Activated CD8-positive, alpha-beta T cell treated with anti-CD3 and anti-CD28 coated beads, Interleukin-2, amount 10 ng/mL, durations not matched to agents 7 days and 5 days (primary cell): ENCODE measurements at regions of chr2 and their contacts with region 1.

Region 1: GRCh38 chr2:191128172-191128910 is 22.5 kb downstream of the STAT4 start:
- DNase-seq: peak; percentile 44
- ATAC-seq: peak; percentile 88
- H3K4me3 Mint-ChIP-seq: peak overlapping the region; percentile 66
- H3K27ac Mint-ChIP-seq: peak overlapping the region; percentile 91
- H3K4me1 Mint-ChIP-seq: peaks cover 77% of the 10 kb centered on the region
- H3K27me3 Mint-ChIP-seq: no peaks in the 10 kb centered on the region

Region 2: GRCh38 chr2:191086706-191087105 is 41.6 kb before region 1 on chr2:
- CTCF ChIA-PET with region 1: no interaction called
- POLR2A ChIA-PET with region 1: no interaction called
- DNase-seq: no peak
- ATAC-seq: no peak
- H3K4me3 Mint-ChIP-seq: no peak overlapping the region
- H3K27ac Mint-ChIP-seq: no peak overlapping the region
- H3K4me1 Mint-ChIP-seq: peaks cover 38% of the 10 kb centered on the region
- H3K27me3 Mint-ChIP-seq: no peaks in the 10 kb centered on the region

Region 3: DNA sequence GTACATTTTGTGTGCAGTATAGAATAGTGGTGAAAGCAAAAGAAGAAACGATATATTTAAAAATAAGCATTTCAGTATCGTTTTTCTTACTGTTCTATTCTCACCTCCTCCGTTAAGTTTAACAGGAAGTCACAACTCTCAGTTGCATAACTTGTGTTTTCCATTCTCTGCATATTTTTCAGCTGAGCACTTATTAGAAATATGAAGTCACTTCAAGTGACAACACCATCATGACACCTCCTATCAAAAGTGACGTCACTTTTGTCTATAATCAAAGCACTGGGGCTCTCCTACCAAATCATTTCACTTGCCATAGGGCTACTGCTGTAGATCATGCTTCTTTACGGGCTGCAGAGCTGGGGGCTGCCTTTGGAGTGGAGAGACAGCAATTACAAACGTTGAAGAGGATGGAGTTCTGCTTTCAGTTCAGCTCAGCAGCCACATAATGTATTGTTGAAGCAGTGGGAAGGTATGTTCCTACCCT is 13.9 kb before region 1 on chr2:
- CTCF ChIA-PET with region 1: interaction called, 12 read pairs
- POLR2A ChIA-PET with region 1: interaction called, 28 read pairs
- DNase-seq: peak; percentile 48
- ATAC-seq: peak; percentile 46
- H3K4me3 Mint-ChIP-seq: peak overlapping the region; percentile 53
- H3K27ac Mint-ChIP-seq: peak overlapping the region; percentile 92
- H3K4me1 Mint-ChIP-seq: peaks cover 76% of the 10 kb centered on the region
- H3K27me3 Mint-ChIP-seq: no peaks in the 10 kb centered on the region